H1 (cell line): ENCODE measurements at regions of chr12 and their contacts with region 1.

Region 1: DNA sequence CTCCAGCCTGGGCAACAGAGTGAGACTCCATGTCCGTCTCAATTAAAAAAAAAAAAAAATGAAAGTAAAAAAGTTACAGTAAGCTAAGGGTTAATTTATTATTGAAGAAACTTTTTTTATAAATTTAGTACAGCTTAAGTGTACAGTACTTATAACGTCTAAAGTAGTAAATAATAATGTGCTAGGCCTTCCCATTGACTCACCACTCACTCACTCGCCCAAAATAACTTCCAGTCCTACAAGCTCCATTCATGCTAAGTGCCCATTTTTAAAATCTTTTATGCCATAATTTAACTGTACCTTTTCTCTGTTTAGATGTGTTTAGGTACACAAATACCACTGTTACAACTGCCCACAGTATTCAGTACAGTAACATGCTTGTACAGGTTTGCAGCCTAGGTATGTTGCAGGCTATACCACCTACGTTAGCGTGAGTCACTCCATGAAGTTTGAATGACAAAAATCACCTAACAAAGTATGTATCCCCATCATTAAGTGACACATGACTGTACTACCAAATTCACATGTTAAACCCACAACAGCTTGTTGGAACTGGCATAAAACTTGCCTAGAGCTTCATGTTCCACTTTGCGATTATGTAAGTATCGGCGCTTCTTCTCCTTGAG is 10.7 kb downstream of the KANSL2 start:
- DNase-seq: no peak
- H3K4me3 ChIP-seq: no peak overlapping the region
- H3K27ac ChIP-seq: no peak overlapping the region
- H3K4me1 ChIP-seq: no peaks in the 10 kb centered on the region
- H3K27me3 ChIP-seq: no peaks in the 10 kb centered on the region
- CTCF ChIP-seq: no peak
- EP300 ChIP-seq: no peak
- POLR2A ChIP-seq: no peak
- RAD21 ChIP-seq: no peak

Region 2: GRCh38 chr12:48651681-48652080 is 19.7 kb before region 1 on chr12:
- CTCF ChIA-PET with region 1: interaction called, 4 read pairs
- POLR2A ChIA-PET with region 1: interaction called, 20 read pairs
- DNase-seq: no peak
- H3K4me3 ChIP-seq: no peak overlapping the region
- H3K27ac ChIP-seq: no peak overlapping the region
- H3K4me1 ChIP-seq: no peaks in the 10 kb centered on the region
- H3K27me3 ChIP-seq: no peaks in the 10 kb centered on the region
- CTCF ChIP-seq: no peak
- EP300 ChIP-seq: no peak
- POLR2A ChIP-seq: no peak
- RAD21 ChIP-seq: no peak

Region 3: DNA sequence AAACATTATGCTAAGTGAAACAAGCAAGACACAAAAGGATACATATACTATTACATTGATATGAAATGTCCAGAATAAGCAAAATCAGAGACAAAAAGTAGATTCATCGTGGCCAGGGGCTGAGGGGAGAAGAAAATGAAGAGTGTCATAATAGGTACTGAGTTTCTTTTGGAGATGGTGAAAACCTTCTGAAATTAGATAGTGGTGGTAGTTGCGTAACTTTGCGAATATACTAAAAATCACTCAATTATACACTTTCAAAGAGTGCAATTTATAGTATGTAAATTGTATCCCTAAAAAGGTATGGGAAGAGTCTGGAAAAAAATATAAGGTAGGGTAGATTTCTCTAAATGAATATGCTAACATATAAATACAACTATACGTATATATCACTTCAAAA is 11.5 kb before region 1 on chr12:
- CTCF ChIA-PET with region 1: no interaction called
- POLR2A ChIA-PET with region 1: interaction called, 33 read pairs
- DNase-seq: no peak
- H3K4me3 ChIP-seq: no peak overlapping the region
- H3K27ac ChIP-seq: no peak overlapping the region
- H3K4me1 ChIP-seq: no peaks in the 10 kb centered on the region
- H3K27me3 ChIP-seq: no peaks in the 10 kb centered on the region
- CTCF ChIP-seq: no peak
- EP300 ChIP-seq: no peak
- POLR2A ChIP-seq: no peak
- RAD21 ChIP-seq: no peak

Region 4: DNA sequence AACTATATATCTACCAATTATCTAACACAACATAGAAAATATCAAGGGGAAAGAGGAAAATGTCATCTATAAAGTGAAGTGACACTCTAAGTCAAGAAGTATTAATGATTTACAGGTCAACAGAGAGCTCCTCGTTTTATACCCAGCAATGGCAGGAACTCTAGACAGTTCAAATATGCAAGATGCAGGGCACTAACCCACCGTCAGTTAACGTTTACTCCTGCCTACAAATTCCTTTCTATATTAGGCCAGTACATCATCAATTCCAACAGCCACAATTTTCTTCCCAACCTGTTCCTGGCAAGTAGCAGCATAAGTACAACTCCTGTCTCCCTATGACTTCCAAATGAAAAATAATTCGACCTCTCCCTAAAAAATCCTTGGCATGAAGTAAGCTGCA is 19.6 kb after region 1 on chr12:
- CTCF ChIA-PET with region 1: no interaction called
- POLR2A ChIA-PET with region 1: interaction called, 15 read pairs
- DNase-seq: no peak
- H3K4me3 ChIP-seq: no peak overlapping the region
- H3K27ac ChIP-seq: no peak overlapping the region
- H3K4me1 ChIP-seq: no peaks in the 10 kb centered on the region
- H3K27me3 ChIP-seq: no peaks in the 10 kb centered on the region
- CTCF ChIP-seq: no peak
- EP300 ChIP-seq: no peak
- POLR2A ChIP-seq: no peak
- RAD21 ChIP-seq: no peak